Caco-2 (cell line): ENCODE measurements at regions of chr19 and their contacts with region 1.

Region 1: GRCh38 chr19:19489804-19490655 is 25.3 kb downstream of the TSSK6 start:
- DNase-seq: peak; percentile 71 to 77
- H3K4me3 ChIP-seq: no peak overlapping the region
- H3K4me3 Mint-ChIP-seq: no peak overlapping the region
- H3K27ac Mint-ChIP-seq: peak overlapping the region; percentile 73
- H3K4me1 ChIP-seq: peaks cover 19% of the 10 kb centered on the region
- H3K4me1 Mint-ChIP-seq: peaks cover 6% of the 10 kb centered on the region
- H3K27me3 ChIP-seq: no peaks in the 10 kb centered on the region
- H3K27me3 Mint-ChIP-seq: no peaks in the 10 kb centered on the region
- CTCF ChIP-seq: peak; percentile 75

Region 2: DNA sequence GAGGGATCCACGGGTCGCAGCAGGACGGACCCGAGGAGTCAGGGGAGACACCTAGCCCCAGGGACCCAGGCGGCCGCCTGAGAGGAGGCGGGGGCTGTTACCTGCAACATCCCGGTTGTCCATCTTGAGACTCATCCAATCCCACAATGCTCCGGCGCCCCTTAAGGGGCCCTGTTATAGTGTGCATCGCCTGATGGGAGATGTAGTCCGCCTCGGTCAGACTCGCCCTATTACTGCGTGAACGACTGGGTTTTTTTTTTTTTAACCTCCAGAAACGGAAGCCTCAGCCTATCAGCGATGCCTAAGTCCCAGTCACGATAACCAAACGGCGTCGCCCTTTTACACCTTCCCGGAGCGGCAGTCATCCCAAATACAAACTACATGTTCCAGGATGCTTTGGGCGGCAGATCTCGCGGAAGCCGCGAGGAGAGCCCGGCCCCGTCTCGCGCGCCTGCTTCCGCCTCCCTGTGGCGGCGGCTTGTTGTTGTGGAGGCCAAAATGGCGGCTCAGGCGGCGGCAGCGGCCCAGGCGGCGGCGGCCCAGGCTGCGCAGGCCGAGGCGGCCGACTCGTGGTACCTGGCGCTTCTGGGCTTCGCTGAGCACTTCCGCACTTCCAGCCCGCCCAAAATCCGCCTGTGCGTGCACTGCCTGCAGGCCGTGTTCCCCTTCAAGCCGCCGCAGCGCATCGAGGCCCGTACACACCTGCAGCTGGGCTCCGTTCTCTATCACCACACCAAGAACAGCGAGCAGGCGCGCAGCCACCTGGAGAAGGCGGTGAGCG is 169.5 kb before region 1 on chr19 and contains the starts of genes MAU2 and SUGP1:
- CTCF ChIA-PET with region 1: no interaction called
- POLR2A ChIA-PET with region 1: no interaction called
- intact Hi-C with region 1: loop called (anchors 1 kb)
- DNase-seq: peak; percentile 91 to 92
- H3K4me3 ChIP-seq: peak within 1 kb of the TSS; percentile 100
- H3K4me3 Mint-ChIP-seq: peak within 1 kb of the TSS; percentile 77
- H3K27ac Mint-ChIP-seq: peak within 1 kb of the TSS; percentile 91
- H3K4me1 ChIP-seq: no peaks in the 10 kb centered on the region; the same call in 1 of the 2 replicates
- H3K4me1 Mint-ChIP-seq: peaks cover under 1% of the 10 kb centered on the region
- H3K27me3 ChIP-seq: no peaks in the 10 kb centered on the region
- H3K27me3 Mint-ChIP-seq: no peaks in the 10 kb centered on the region
- CTCF ChIP-seq: no peak
- total RNA-seq, gene MAU2: 51.3 and 62.6 TPM in 2 replicates
- total RNA-seq, gene SUGP1: 51.2 and 58.4 TPM in 2 replicates

Region 3: DNA sequence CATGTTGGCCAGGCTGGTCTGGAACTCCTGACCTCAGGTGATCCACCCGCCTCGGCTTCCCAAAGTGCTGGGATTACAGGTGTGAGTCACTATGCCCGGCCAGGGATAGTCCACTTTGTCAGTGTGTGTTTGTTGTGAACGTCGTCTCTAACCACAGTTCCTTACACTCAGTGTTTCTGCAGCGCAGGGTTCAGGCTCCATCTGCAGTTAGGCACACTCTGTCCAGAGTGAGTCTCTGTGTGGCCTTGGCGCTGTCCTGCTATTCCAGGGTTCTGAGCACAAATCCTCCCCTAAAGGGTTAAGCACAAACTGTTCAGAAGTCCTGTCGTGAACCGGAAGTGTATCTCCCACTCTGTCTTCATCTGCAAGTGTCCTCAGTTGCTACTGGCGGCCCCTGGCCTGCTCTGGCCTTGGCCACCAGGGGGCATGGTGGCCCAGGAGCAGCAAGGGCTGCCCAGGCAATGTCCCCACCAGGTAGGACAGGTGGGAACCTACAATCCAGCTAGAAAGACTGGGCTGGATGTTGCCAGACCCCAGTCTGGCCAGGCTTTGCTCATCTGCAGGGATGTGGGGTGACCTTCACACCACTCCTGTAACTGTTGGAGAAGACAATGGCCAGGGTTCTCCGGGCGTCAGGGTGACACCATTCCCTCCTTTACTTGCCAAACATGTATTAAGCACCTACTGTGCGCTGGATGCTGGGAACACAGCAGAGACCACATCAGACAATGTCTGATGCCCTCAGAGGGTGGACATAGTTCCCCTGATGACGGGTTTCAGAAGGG is 123.2 kb before region 1 on chr19:
- CTCF ChIA-PET with region 1: interaction called, 26 read pairs
- POLR2A ChIA-PET with region 1: no interaction called
- intact Hi-C with region 1: loop called (anchors 1 kb)
- DNase-seq: peak; percentile 90 to 93
- H3K4me3 ChIP-seq: no peak overlapping the region
- H3K4me3 Mint-ChIP-seq: no peak overlapping the region
- H3K27ac Mint-ChIP-seq: peak overlapping the region; percentile 55
- H3K4me1 ChIP-seq: peaks cover 7% of the 10 kb centered on the region
- H3K4me1 Mint-ChIP-seq: peaks cover 7% of the 10 kb centered on the region
- H3K27me3 ChIP-seq: no peaks in the 10 kb centered on the region; the same call in 1 of the 2 replicates
- H3K27me3 Mint-ChIP-seq: no peaks in the 10 kb centered on the region
- CTCF ChIP-seq: peak; percentile 80 to 94

Region 4: DNA sequence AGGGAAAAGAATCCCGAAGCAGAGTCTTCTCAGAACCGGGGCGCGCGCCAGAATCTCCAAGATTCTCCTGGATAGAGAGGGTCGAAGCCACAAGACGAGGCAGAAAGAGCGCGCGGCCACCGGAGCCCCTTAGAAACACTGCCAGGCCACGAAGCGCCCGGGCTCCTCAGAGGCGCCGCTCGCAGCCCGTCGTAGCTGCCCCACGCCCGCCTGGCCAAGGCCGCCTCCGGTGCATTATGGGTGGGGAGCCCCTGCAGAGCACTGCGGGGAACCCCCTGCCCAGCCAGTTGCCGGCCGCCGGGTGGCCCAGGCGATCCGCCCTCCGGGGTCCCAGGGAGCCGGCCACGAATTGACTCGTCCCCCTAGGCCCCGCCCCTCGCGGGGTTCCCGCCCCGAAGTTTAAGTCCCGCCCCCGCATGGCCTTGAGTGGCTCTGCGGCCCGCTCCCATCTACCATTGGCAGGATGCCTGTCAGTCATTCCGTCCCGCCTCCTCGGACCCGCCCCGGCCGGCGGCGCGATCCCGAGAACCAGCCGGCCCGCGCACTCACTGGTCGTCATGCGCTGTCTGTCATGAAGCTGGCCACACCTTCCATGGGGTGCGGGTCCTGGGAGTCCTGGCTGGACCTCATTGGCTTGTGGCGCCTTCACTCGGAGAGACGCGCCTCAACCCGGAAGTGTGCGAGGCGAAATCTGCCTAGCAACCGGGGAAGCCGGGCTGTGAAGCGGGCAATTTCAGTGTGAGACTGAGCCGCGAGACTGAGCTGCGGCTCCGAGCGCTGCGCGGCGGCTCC is 104.7 kb before region 1 on chr19:
- CTCF ChIA-PET with region 1: interaction called, 9 read pairs
- POLR2A ChIA-PET with region 1: no interaction called
- intact Hi-C with region 1: loop called (anchors 1 kb)
- DNase-seq: peak; percentile 99 to 100
- H3K4me3 ChIP-seq: peak overlapping the region; percentile 88
- H3K4me3 Mint-ChIP-seq: peak overlapping the region; percentile 94
- H3K27ac Mint-ChIP-seq: peak overlapping the region; percentile 99
- H3K4me1 ChIP-seq: peaks cover 6% of the 10 kb centered on the region; the same call in 1 of the 2 replicates
- H3K4me1 Mint-ChIP-seq: peaks cover 6% of the 10 kb centered on the region
- H3K27me3 ChIP-seq: no peaks in the 10 kb centered on the region
- H3K27me3 Mint-ChIP-seq: no peaks in the 10 kb centered on the region
- CTCF ChIP-seq: peak in 1 of 2 experiments; percentile 23

Region 5: DNA sequence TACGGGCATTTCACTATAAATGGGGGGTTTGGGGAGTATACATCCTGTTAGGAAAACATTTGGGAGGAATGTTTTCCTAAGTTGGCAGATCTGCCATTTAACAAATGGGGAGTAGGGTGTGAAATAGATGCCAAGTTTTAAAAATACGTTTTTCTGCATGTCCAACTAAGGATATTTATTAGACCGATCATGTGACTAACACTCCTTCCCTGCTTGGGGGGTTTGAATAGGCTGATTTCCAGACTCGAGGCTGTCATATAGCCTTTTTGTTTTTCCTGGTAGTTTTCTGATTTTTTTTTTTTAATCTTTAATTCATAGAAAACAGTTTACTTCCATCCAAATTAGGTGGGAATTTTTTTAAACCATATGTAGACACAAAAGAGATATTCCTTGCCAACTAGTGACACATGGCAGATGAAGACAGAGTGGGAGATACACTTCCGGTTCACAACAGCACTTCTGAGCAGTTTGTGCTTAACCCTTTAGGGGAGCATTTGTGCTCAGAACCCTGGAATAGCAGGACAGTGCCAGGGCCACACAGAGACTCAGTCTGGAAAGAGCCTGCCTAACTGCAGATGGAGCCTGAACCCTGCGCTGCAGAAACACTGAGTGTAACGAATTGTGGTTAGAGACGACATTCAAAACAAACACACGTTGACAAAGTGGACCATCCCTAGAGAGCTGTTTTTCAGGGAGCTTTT is 90.1 kb before region 1 on chr19:
- CTCF ChIA-PET with region 1: interaction called, 13 read pairs
- POLR2A ChIA-PET with region 1: no interaction called
- intact Hi-C with region 1: loop called (anchors 2 kb)
- DNase-seq: no peak
- H3K4me3 ChIP-seq: no peak overlapping the region
- H3K4me3 Mint-ChIP-seq: no peak overlapping the region
- H3K27ac Mint-ChIP-seq: no peak overlapping the region
- H3K4me1 ChIP-seq: no peaks in the 10 kb centered on the region
- H3K4me1 Mint-ChIP-seq: peaks cover 9% of the 10 kb centered on the region
- H3K27me3 ChIP-seq: no peaks in the 10 kb centered on the region
- H3K27me3 Mint-ChIP-seq: no peaks in the 10 kb centered on the region
- CTCF ChIP-seq: no peak

Region 6: GRCh38 chr19:19404879-19405860 is 84.9 kb before region 1 on chr19 and contains the start of gene GATAD2A:
- CTCF ChIA-PET with region 1: interaction called, 13 read pairs
- POLR2A ChIA-PET with region 1: no interaction called
- intact Hi-C with region 1: loop called (anchors 2 kb)
- DNase-seq: peak; percentile 85 to 93
- H3K4me3 ChIP-seq: peak within 1 kb of the TSS; percentile 89
- H3K4me3 Mint-ChIP-seq: peak within 1 kb of the TSS; percentile 95
- H3K27ac Mint-ChIP-seq: peak within 1 kb of the TSS; percentile 93
- H3K4me1 ChIP-seq: peaks cover 34% of the 10 kb centered on the region
- H3K4me1 Mint-ChIP-seq: peaks cover 20% of the 10 kb centered on the region
- H3K27me3 ChIP-seq: no peaks in the 10 kb centered on the region
- H3K27me3 Mint-ChIP-seq: no peaks in the 10 kb centered on the region
- CTCF ChIP-seq: peak in 1 of 2 experiments; percentile 44
- total RNA-seq, gene GATAD2A: 118 and 126 TPM in 2 replicates

Region 7: GRCh38 chr19:19444681-19445155 is 45.3 kb before region 1 on chr19:
- CTCF ChIA-PET with region 1: no interaction called
- POLR2A ChIA-PET with region 1: no interaction called
- intact Hi-C with region 1: no loop called
- DNase-seq: no peak
- H3K4me3 ChIP-seq: no peak overlapping the region
- H3K4me3 Mint-ChIP-seq: no peak overlapping the region
- H3K27ac Mint-ChIP-seq: no peak overlapping the region
- H3K4me1 ChIP-seq: no peaks in the 10 kb centered on the region
- H3K4me1 Mint-ChIP-seq: peaks cover 21% of the 10 kb centered on the region
- H3K27me3 ChIP-seq: no peaks in the 10 kb centered on the region
- H3K27me3 Mint-ChIP-seq: no peaks in the 10 kb centered on the region
- CTCF ChIP-seq: no peak

Region 8: GRCh38 chr19:19475849-19476828 is 13.9 kb before region 1 on chr19:
- CTCF ChIA-PET with region 1: interaction called, 10 read pairs
- POLR2A ChIA-PET with region 1: no interaction called
- intact Hi-C with region 1: no loop called
- DNase-seq: peak in 1 of 2 experiments; percentile 38
- H3K4me3 ChIP-seq: no peak overlapping the region
- H3K4me3 Mint-ChIP-seq: no peak overlapping the region
- H3K27ac Mint-ChIP-seq: no peak overlapping the region
- H3K4me1 ChIP-seq: no peaks in the 10 kb centered on the region
- H3K4me1 Mint-ChIP-seq: peaks cover 10% of the 10 kb centered on the region
- H3K27me3 ChIP-seq: no peaks in the 10 kb centered on the region
- H3K27me3 Mint-ChIP-seq: no peaks in the 10 kb centered on the region
- CTCF ChIP-seq: peak in 1 of 2 experiments; percentile 56